ENCODE measurements at regions of chr2 and their contacts with region 1.

Region 1: DNA sequence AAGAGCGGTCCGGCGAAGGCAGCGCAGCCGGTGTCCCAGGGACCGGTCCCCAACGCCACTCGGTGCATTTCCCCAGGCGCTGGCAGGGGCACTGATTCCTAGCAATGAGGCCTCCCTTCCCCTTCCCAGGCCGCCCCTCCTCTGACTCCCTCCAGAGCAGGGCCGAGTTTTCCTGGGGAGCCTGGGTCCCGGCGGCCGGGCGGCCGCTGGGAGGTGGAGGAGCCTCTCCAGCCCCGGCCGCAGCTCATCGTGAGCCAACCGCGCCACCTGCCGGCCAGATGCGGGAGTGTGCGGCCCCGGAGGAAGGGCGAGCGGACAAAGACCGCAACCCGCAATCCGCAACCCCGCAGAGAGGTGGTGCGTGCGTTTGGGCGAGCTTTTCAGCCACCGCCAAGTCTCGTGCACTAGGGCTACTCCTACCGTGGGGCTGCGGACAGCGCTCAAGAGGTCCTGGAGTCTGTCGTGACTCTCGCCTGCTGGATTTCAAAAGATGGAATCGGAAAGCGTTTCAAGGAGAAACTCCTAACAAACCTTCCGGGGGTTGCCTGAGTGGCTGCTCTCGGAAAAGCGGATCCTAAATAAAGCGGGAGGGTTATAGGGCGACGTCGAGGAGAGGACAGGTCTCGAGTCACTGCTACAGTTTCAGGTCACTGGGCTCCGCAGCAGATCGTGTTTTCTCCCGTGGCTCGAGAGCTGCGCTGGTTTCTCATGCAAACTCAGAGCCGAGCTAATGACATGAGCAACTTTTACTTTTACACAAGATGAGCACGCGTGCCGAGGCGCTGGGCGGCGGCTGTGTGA is 1.5 kb upstream of the EPHA4 start:
- DNase-seq: peak; percentile 60 to 90 (median 77)
- ATAC-seq: peak; percentile 65
- H3K4me3 ChIP-seq: peak overlapping the region; percentile 91
- H3K4me3 Mint-ChIP-seq: peak overlapping the region; percentile 77 to 97 (median 86)
- H3K27ac ChIP-seq: no peak overlapping the region
- H3K27ac Mint-ChIP-seq: peak overlapping the region in 5 of 9 donors; percentile 10 to 76 (median 71)
- H3K4me1 ChIP-seq: peaks cover 11 to 17% of the 10 kb centered on the region in 2 donors
- H3K4me1 Mint-ChIP-seq: peaks cover 22 to 35% (median 31%) of the 10 kb centered on the region in 7 donors
- H3K27me3 ChIP-seq: peaks cover 0 to 4% of the 10 kb centered on the region in 2 donors
- H3K27me3 Mint-ChIP-seq: peaks cover 33 to 68% (median 59%) of the 10 kb centered on the region in 5 donors

Region 2: GRCh38 chr2:219642465-219643080 is 1931.1 kb before region 1 on chr2:
- CTCF ChIA-PET with region 1: no interaction called
- POLR2A ChIA-PET with region 1: no interaction called
- intact Hi-C with region 1: loop called in 1 of 2 experiments (anchors 1 kb)
- DNase-seq: peak; percentile 73 to 88 (median 83)
- ATAC-seq: peak; percentile 99
- H3K4me3 ChIP-seq: no peak overlapping the region
- H3K4me3 Mint-ChIP-seq: peak overlapping the region in 1 of 10 donors; percentile 29
- H3K27ac ChIP-seq: no peak overlapping the region
- H3K27ac Mint-ChIP-seq: peak overlapping the region in 3 of 9 donors; percentile 16 to 69 (median 20)
- H3K4me1 ChIP-seq: peaks cover 3 to 4% of the 10 kb centered on the region in 2 donors
- H3K4me1 Mint-ChIP-seq: peaks cover 0 to 15% (median 0%) of the 10 kb centered on the region in 7 donors
- H3K27me3 ChIP-seq: no peaks in the 10 kb centered on the region
- H3K27me3 Mint-ChIP-seq: peaks cover 3 to 29% (median 12%) of the 10 kb centered on the region in 5 donors

Region 3: DNA sequence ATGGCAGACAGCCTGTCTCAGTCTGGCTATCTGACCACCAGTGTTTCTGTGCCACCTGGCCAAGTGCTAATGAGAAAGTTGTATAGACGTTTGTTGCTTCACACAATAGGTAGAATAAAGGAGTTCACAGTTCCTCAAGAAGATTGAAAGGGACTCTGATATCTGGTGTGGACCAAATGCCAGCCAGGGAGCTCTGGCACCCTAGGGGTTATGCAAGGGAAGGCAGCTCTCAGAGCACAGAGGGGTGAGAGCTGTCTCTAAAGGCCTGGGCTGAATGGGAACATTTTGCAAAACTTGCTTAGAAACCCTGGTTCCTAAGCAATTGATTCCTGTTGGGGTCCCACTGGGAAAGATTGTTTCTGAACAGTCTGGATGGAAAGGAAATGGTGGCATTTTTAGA is 555.4 kb before region 1 on chr2:
- CTCF ChIA-PET with region 1: no interaction called
- POLR2A ChIA-PET with region 1: no interaction called
- intact Hi-C with region 1: loop called in 1 of 2 experiments (anchors 10 kb)
- DNase-seq: no peak
- ATAC-seq: no peak
- H3K4me3 ChIP-seq: no peak overlapping the region
- H3K4me3 Mint-ChIP-seq: no peak overlapping the region
- H3K27ac ChIP-seq: no peak overlapping the region
- H3K27ac Mint-ChIP-seq: no peak overlapping the region
- H3K4me1 ChIP-seq: no peaks in the 10 kb centered on the region
- H3K4me1 Mint-ChIP-seq: no peaks in the 10 kb centered on the region
- H3K27me3 ChIP-seq: no peaks in the 10 kb centered on the region
- H3K27me3 Mint-ChIP-seq: peaks cover 0 to 5% (median 0%) of the 10 kb centered on the region in 5 donors

Region 4: GRCh38 chr2:221264318-221264717 is 309.3 kb before region 1 on chr2:
- CTCF ChIA-PET with region 1: no interaction called
- POLR2A ChIA-PET with region 1: no interaction called
- intact Hi-C with region 1: loop called in 1 of 2 experiments (anchors 5 kb)
- DNase-seq: no peak
- ATAC-seq: no peak
- H3K4me3 ChIP-seq: no peak overlapping the region
- H3K4me3 Mint-ChIP-seq: no peak overlapping the region
- H3K27ac ChIP-seq: no peak overlapping the region
- H3K27ac Mint-ChIP-seq: no peak overlapping the region
- H3K4me1 ChIP-seq: no peaks in the 10 kb centered on the region
- H3K4me1 Mint-ChIP-seq: no peaks in the 10 kb centered on the region
- H3K27me3 ChIP-seq: no peaks in the 10 kb centered on the region
- H3K27me3 Mint-ChIP-seq: peaks cover 0 to 11% (median 4%) of the 10 kb centered on the region in 5 donors

Region 5: GRCh38 chr2:221360742-221361141 is 212.9 kb before region 1 on chr2:
- CTCF ChIA-PET with region 1: no interaction called
- POLR2A ChIA-PET with region 1: no interaction called
- intact Hi-C with region 1: loop called in 1 of 2 experiments (anchors 5 kb)
- DNase-seq: no peak
- ATAC-seq: no peak
- H3K4me3 ChIP-seq: no peak overlapping the region
- H3K4me3 Mint-ChIP-seq: no peak overlapping the region
- H3K27ac ChIP-seq: no peak overlapping the region
- H3K27ac Mint-ChIP-seq: no peak overlapping the region
- H3K4me1 ChIP-seq: no peaks in the 10 kb centered on the region
- H3K4me1 Mint-ChIP-seq: no peaks in the 10 kb centered on the region
- H3K27me3 ChIP-seq: no peaks in the 10 kb centered on the region
- H3K27me3 Mint-ChIP-seq: peaks cover 0 to under 1% (median 0%) of the 10 kb centered on the region in 5 donors

Region 6: GRCh38 chr2:221502270-221503010 is 71.2 kb before region 1 on chr2:
- CTCF ChIA-PET with region 1: interaction called, 4 read pairs
- POLR2A ChIA-PET with region 1: interaction called, 4 read pairs
- intact Hi-C with region 1: loop called (anchors 1 to 2 kb)
- DNase-seq: no peak
- ATAC-seq: peak; percentile 18
- H3K4me3 ChIP-seq: no peak overlapping the region
- H3K4me3 Mint-ChIP-seq: no peak overlapping the region
- H3K27ac ChIP-seq: no peak overlapping the region
- H3K27ac Mint-ChIP-seq: peak overlapping the region in 2 of 9 donors; percentile 19 to 22
- H3K4me1 ChIP-seq: no peaks in the 10 kb centered on the region
- H3K4me1 Mint-ChIP-seq: peaks cover 0 to 22% (median 15%) of the 10 kb centered on the region in 7 donors
- H3K27me3 ChIP-seq: no peaks in the 10 kb centered on the region
- H3K27me3 Mint-ChIP-seq: peaks cover 0 to 5% (median 0%) of the 10 kb centered on the region in 5 donors

Region 7: GRCh38 chr2:221969087-221969829 is 395.6 kb after region 1 on chr2:
- CTCF ChIA-PET with region 1: no interaction called
- POLR2A ChIA-PET with region 1: no interaction called
- intact Hi-C with region 1: loop called in 1 of 2 experiments (anchors 2 kb)
- DNase-seq: peak in 3 of 9 donors; percentile 1 to 5 (median 4)
- ATAC-seq: no peak
- H3K4me3 ChIP-seq: no peak overlapping the region
- H3K4me3 Mint-ChIP-seq: no peak overlapping the region
- H3K27ac ChIP-seq: no peak overlapping the region
- H3K27ac Mint-ChIP-seq: no peak overlapping the region
- H3K4me1 ChIP-seq: no peaks in the 10 kb centered on the region
- H3K4me1 Mint-ChIP-seq: no peaks in the 10 kb centered on the region
- H3K27me3 ChIP-seq: no peaks in the 10 kb centered on the region
- H3K27me3 Mint-ChIP-seq: peaks cover 0 to 13% (median 7%) of the 10 kb centered on the region in 5 donors

Measured in naive thymus-derived CD4-positive, alpha-beta T cell (primary cell).